CD8-positive, alpha-beta T cell (primary cell): ENCODE measurements at regions of chr2 and their contacts with region 1.

Region 1: GRCh38 chr2:168434146-168434545 is 21.9 kb upstream of the CERS6 start:
- DNase-seq: peak in 1 of 9 experiments; percentile 17
- ATAC-seq: no peak
- H3K4me3 ChIP-seq: no peak overlapping the region
- H3K4me3 Mint-ChIP-seq: no peak overlapping the region
- H3K27ac ChIP-seq: no peak overlapping the region
- H3K27ac Mint-ChIP-seq: no peak overlapping the region
- H3K4me1 ChIP-seq: peaks cover 49% of the 10 kb centered on the region
- H3K4me1 Mint-ChIP-seq: peaks cover 64% of the 10 kb centered on the region
- H3K27me3 ChIP-seq: no peaks in the 10 kb centered on the region
- H3K27me3 Mint-ChIP-seq: no peaks in the 10 kb centered on the region
- CTCF ChIP-seq: no peak

Region 2: DNA sequence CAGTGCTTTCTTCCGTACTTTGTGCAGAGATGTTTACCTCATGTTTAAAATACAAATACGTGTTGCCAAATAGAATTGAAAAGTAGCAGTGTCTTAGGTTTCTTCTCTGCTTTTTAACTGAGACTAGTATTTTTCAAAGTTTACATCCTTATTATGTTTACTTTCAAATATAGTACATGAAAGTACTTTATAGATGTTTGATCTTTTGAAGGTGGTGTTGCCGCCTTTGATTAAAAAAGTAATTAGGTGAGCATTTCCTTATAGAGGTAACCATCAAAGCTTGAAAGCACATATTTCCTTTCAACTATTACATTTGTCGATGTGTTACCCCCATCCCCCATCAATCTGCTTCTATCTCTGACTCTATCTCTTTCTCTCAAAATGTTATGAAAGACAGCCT is 108.9 kb after region 1 on chr2:
- CTCF ChIA-PET with region 1: interaction called, 3 read pairs
- POLR2A ChIA-PET with region 1: no interaction called
- intact Hi-C with region 1: loop called in 1 of 2 experiments (anchors 5 kb)
- DNase-seq: peak in 2 of 9 experiments; percentile 15 to 40
- ATAC-seq: peak; percentile 71
- H3K4me3 ChIP-seq: no peak overlapping the region
- H3K4me3 Mint-ChIP-seq: no peak overlapping the region
- H3K27ac ChIP-seq: no peak overlapping the region
- H3K27ac Mint-ChIP-seq: peak overlapping the region; percentile 19
- H3K4me1 ChIP-seq: peaks cover 31% of the 10 kb centered on the region
- H3K4me1 Mint-ChIP-seq: peaks cover 51% of the 10 kb centered on the region
- H3K27me3 ChIP-seq: no peaks in the 10 kb centered on the region
- H3K27me3 Mint-ChIP-seq: no peaks in the 10 kb centered on the region
- CTCF ChIP-seq: no peak

Region 3: DNA sequence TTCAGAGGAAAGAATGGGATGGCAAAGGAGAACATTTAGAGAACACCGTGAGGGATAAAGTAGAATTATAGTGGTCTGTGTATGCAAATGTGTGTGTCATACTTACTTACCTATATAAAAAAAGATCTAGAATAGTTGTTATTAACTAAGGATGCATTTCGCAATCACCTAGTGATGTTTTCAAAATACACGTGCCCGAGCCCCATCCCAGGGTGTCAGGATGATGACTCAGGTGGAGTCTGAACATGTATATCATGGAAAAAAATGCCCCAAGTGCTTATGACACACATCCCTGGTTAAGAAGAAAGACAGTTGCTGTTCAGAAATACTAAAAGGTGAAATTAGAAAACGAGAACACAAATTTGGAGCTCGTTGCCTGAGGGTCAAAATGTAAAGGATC is 131.0 kb after region 1 on chr2:
- CTCF ChIA-PET with region 1: no interaction called
- POLR2A ChIA-PET with region 1: no interaction called
- intact Hi-C with region 1: no loop called
- DNase-seq: no peak
- ATAC-seq: no peak
- H3K4me3 ChIP-seq: no peak overlapping the region
- H3K4me3 Mint-ChIP-seq: no peak overlapping the region
- H3K27ac ChIP-seq: no peak overlapping the region
- H3K27ac Mint-ChIP-seq: peak overlapping the region; percentile 56
- H3K4me1 ChIP-seq: no peaks in the 10 kb centered on the region
- H3K4me1 Mint-ChIP-seq: peaks cover 38% of the 10 kb centered on the region
- H3K27me3 ChIP-seq: no peaks in the 10 kb centered on the region
- H3K27me3 Mint-ChIP-seq: no peaks in the 10 kb centered on the region
- CTCF ChIP-seq: no peak